Caco-2 (cell line): ENCODE measurements at regions of chr11 and their contacts with region 1.

Region 1: DNA sequence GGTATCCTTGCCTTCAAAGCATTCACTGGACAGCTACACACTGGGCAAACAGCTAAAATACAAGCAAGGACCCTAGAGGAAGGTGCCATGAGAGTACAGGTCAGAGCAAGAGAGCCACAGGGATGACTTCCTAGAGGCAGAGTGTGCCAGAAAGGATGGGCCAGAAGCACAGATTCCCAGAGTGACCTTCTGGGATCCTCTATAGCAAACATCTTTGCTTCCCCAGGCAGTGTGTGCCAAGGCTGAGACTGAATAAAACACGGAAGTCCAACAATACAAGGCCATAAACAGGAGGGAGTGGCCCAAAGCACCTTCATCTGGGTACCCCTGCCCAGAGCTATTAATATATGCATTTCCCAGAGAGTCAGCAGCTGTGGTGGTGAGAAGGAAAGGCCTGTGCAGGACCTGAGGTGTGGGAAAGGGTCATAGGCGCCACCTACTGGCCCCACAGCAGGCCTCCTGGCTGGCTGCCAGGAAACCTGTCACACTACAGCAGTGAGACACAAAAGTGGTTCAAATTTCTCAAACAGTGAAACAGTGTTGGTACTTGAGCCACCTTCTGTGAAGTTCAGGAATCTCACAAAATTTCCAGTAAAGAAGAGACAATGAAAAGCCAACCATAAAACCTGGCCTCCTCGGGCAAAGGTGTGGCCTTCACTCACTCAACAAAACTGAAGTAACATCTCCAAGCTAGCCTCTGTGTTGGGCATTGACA is 20.3 kb downstream of the CLPB start:
- DNase-seq: peak; percentile 87 to 89
- H3K4me3 ChIP-seq: no peak overlapping the region
- H3K4me3 Mint-ChIP-seq: no peak overlapping the region
- H3K27ac Mint-ChIP-seq: no peak overlapping the region
- H3K4me1 ChIP-seq: peaks cover 18% of the 10 kb centered on the region
- H3K4me1 Mint-ChIP-seq: peaks cover 6% of the 10 kb centered on the region
- H3K27me3 ChIP-seq: no peaks in the 10 kb centered on the region
- H3K27me3 Mint-ChIP-seq: no peaks in the 10 kb centered on the region
- CTCF ChIP-seq: peak; percentile 98 to 99

Region 2: DNA sequence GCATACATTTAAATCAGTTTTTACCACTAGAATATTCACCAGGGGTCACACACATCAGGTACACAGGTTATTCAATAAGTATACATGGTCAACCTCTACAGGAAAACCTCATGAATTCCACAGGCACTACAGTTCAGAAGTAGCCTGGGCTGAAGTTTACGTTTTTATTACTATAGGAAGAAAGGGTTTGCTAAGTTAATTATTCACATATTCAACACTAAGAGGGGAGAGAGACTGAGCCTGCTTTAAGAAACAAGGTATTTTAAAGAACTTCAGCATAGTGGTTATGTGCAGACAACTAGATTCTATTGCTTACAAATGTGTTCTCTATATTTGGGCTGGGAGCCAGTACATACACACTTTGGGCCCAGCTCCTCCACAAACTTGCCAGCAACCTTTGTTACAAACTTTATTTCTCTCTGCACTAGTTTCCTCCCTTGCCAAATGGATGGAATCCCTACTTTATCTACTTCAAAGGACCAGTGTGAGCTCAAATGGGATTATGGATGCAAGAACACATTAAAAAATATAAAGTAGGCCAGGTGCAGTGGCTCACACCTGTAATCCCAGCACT is 383.5 kb before region 1 on chr11:
- CTCF ChIA-PET with region 1: interaction called, 19 read pairs
- POLR2A ChIA-PET with region 1: no interaction called
- intact Hi-C with region 1: loop called (anchors 1 kb)
- DNase-seq: no peak
- H3K4me3 ChIP-seq: no peak overlapping the region
- H3K4me3 Mint-ChIP-seq: no peak overlapping the region
- H3K27ac Mint-ChIP-seq: peak overlapping the region; percentile 58
- H3K4me1 ChIP-seq: peaks cover 9% of the 10 kb centered on the region
- H3K4me1 Mint-ChIP-seq: peaks cover 12% of the 10 kb centered on the region
- H3K27me3 ChIP-seq: no peaks in the 10 kb centered on the region
- H3K27me3 Mint-ChIP-seq: no peaks in the 10 kb centered on the region
- CTCF ChIP-seq: no peak

Region 3: DNA sequence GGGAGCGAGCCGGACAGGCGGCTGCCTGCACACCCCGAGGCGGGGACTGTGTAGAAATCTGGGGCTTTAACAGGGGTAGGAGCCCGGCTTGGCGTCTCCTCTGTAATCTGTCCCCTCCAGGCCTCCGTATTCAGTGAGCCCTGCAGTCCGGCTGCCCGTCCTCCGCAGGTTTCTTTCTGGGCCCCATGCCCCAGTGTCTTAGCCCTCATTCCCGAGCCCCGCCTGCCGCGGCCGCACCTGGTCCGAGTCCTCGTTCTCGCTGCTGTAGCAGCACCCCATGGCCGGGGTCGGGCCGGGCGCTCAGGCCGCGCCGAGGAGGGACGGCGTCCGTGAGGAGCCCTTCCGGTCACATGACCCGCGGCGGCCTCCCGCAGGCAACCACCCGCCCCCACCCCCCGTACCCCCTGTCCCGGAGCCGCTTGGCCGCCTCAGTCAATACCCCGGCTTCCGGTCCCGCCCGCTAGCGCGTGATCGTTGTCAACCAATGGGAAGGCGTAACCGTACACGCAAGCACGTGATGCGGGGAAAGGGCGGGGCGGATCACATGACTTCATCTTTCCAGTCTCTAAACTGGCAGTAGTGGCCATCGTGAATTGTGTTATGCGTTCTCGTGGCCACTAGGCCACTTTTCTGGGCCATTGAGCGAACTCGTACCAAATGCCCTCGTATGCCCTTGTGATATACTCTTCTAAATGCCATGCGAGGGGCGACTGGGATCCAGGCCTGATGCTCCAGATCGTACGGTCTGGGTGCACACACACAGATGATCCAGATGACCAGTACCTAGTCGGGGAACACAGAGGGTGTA is 310.9 kb before region 1 on chr11 and contains the start of gene LAMTOR1:
- CTCF ChIA-PET with region 1: no interaction called
- POLR2A ChIA-PET with region 1: no interaction called
- intact Hi-C with region 1: loop called (anchors 1 kb)
- DNase-seq: peak; percentile 100
- H3K4me3 ChIP-seq: peak within 1 kb of the TSS; percentile 93
- H3K4me3 Mint-ChIP-seq: peak within 1 kb of the TSS; percentile 97
- H3K27ac Mint-ChIP-seq: peak within 1 kb of the TSS; percentile 98
- H3K4me1 ChIP-seq: peaks cover 18% of the 10 kb centered on the region
- H3K4me1 Mint-ChIP-seq: peaks cover 26% of the 10 kb centered on the region
- H3K27me3 ChIP-seq: no peaks in the 10 kb centered on the region
- H3K27me3 Mint-ChIP-seq: no peaks in the 10 kb centered on the region
- CTCF ChIP-seq: peak; percentile 72 to 79
- total RNA-seq, gene LAMTOR1: 158 and 170 TPM in 2 replicates

Region 4: DNA sequence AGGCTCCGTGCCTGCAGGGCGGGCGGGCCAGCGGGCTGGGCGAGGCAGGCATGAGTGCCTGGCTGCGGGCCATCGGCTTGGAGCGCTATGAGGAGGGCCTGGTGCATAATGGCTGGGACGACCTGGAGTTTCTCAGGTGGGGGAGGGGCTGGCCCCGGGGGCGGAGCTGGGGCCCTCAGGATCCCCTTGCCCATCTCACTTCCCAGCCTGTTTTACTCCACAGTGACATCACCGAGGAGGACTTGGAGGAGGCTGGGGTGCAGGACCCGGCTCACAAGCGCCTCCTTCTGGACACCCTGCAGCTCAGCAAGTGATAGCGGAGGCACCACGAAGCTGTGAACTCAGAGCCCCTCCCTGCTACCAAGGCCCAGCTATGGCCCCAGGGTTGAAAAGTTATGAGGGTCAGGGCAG is 176.0 kb before region 1 on chr11:
- CTCF ChIA-PET with region 1: no interaction called
- POLR2A ChIA-PET with region 1: no interaction called
- intact Hi-C with region 1: loop called (anchors 1 kb)
- DNase-seq: peak; percentile 68 to 72
- H3K4me3 ChIP-seq: no peak overlapping the region
- H3K4me3 Mint-ChIP-seq: no peak overlapping the region
- H3K27ac Mint-ChIP-seq: no peak overlapping the region
- H3K4me1 ChIP-seq: peaks cover 24% of the 10 kb centered on the region
- H3K4me1 Mint-ChIP-seq: peaks cover 14% of the 10 kb centered on the region
- H3K27me3 ChIP-seq: no peaks in the 10 kb centered on the region
- H3K27me3 Mint-ChIP-seq: no peaks in the 10 kb centered on the region
- CTCF ChIP-seq: peak; percentile 65 to 72

Region 5: GRCh38 chr11:72352859-72353551 is 61.1 kb before region 1 on chr11:
- CTCF ChIA-PET with region 1: interaction called, 143 read pairs
- POLR2A ChIA-PET with region 1: interaction called, 3 read pairs
- intact Hi-C with region 1: loop called (anchors 1 kb)
- DNase-seq: peak; percentile 46 to 60
- H3K4me3 ChIP-seq: no peak overlapping the region
- H3K4me3 Mint-ChIP-seq: no peak overlapping the region
- H3K27ac Mint-ChIP-seq: no peak overlapping the region
- H3K4me1 ChIP-seq: peaks cover 7% of the 10 kb centered on the region; the same call in 1 of the 2 replicates
- H3K4me1 Mint-ChIP-seq: peaks cover 9% of the 10 kb centered on the region
- H3K27me3 ChIP-seq: no peaks in the 10 kb centered on the region
- H3K27me3 Mint-ChIP-seq: no peaks in the 10 kb centered on the region
- CTCF ChIP-seq: peak; percentile 21 to 35

Region 6: DNA sequence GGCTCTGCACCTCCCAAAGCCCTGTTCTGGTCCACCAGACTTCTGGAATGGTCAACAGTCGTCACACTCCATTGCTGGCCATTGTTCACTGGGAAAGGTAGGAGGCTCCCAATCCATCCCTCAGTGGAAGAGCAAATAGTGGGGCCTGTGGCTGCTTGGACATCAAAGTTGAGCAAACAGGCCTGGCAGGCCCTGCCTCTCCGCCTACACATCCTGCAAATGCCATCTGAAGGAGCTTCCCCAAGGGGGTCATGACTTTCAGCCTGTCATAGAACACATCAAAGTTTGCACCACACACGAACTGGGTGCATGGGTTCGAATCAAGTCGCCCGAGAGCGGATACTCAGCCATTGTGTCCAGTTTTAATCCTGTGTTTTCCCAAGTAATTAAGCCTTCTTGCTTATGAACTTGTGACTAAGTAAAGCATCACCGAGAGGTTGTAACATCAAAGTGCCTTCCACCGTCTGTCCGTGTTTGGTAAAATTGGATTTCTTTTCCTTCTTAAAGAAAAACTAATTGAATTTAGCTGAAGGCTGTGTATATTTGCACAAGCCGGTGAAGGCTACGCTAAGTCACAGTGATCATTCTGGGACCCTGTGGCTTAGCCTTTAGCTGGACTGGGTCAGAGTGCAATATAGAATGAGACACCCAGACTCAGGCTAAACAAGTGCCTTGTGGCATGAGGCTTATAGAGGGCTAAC is 15.9 kb before region 1 on chr11:
- CTCF ChIA-PET with region 1: interaction called, 20 read pairs
- POLR2A ChIA-PET with region 1: no interaction called
- intact Hi-C with region 1: loop called (anchors 1 kb)
- DNase-seq: peak; percentile 87 to 90
- H3K4me3 ChIP-seq: no peak overlapping the region
- H3K4me3 Mint-ChIP-seq: no peak overlapping the region
- H3K27ac Mint-ChIP-seq: peak overlapping the region; percentile 56
- H3K4me1 ChIP-seq: peaks cover 23% of the 10 kb centered on the region
- H3K4me1 Mint-ChIP-seq: peaks cover 9% of the 10 kb centered on the region
- H3K27me3 ChIP-seq: no peaks in the 10 kb centered on the region
- H3K27me3 Mint-ChIP-seq: no peaks in the 10 kb centered on the region
- CTCF ChIP-seq: no peak